GM23248 (cell line): ENCODE measurements at regions of chr3 and their contacts with region 1.

Region 1: DNA sequence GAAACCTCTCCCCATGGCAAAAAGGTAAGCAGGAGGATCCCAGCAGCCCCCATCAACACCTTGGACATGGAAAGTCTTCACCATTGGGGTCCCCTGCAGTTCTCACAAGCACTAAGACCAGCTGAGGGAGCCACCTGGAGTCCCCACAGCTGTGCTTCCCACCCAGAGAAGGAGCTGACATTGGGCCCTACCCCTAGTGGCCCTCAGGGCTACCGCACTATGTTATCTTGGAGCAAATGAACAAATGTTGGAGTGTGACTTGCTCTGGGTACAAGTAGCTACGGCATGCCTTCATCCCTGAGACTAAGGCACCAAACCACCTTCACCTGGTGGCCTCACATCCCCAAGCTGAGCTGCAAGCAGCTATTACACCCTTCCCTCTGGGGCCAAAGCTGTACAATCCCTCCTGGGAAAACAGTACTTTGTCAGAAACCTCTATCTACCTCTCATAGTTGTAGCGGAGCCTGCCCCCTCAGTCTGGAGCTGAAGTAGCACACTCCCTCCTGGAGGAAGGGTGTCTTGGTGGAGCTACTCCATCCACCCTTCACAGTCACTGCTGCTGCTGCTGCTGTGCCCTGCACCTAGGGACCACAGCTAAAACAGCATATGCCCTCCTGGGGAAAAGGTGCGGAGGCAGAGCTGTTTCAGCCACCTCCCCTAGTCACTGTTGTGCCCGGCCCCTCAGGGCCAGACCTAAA is 42.7 kb downstream of the SERP1 start:
- DNase-seq: no peak
- H3K4me3 ChIP-seq: no peak overlapping the region
- H3K27ac ChIP-seq: no peak overlapping the region
- H3K4me1 ChIP-seq: no peaks in the 10 kb centered on the region
- H3K27me3 ChIP-seq: no peaks in the 10 kb centered on the region

Region 2: GRCh38 chr3:149958171-149958796 is 545.3 kb before region 1 on chr3:
- in situ Hi-C with region 1: loop called (anchors 10 kb)
- DNase-seq: peak; percentile 31
- H3K4me3 ChIP-seq: no peak overlapping the region
- H3K27ac ChIP-seq: no peak overlapping the region
- H3K4me1 ChIP-seq: peaks cover 26% of the 10 kb centered on the region
- H3K27me3 ChIP-seq: no peaks in the 10 kb centered on the region